ENCODE measurements at regions of chr13 and their contacts with region 1.

Region 1: DNA sequence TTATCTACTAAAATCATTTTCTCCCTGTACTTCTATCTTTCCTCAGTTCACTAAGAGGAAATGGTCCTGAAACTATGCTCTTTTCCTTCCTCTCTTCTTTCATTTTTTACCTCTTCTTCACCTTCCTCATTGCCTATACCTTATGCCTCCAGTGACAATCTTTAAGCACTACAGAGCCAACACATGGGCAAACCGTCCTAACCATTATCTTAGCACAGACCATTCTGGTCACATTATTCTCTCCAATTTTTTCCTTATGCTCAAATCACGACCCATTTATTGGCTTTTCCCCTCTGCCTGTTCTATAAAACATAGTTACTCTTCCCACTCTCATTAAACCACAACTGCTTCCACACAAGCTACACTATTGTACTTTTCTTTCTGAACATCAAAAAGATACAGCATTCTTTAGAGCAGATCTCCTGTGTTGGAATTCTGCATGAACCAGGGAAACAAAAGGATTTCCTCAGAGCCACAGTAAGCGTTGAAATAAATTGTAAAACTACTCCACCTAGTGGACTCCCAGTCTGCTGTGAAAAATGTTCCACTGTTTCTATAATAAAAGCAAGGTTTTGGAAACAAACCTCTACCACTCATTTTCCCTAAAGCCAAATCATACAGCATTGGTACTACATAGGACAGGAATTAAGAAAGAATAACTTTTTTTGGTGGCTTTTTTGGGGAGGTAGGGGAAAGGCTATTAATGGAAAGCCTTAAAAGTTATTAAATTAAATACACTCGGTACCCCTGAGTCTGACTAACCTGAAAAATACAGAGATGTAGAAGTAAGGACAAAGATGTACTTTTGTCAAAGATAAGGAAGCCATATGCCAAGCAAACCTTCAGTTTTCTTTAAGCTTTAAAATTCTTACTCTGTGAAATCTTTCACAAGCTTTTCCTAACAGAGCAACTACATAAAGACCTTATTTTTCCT is 19.5 kb downstream of the NUFIP1 start:
- DNase-seq: no peak
- ATAC-seq: no peak
- H3K4me3 ChIP-seq: no peak overlapping the region
- H3K27ac ChIP-seq: no peak overlapping the region
- H3K4me1 ChIP-seq: peaks cover 5% of the 10 kb centered on the region; the same call in 1 of the 2 replicates
- H3K27me3 ChIP-seq: no peaks in the 10 kb centered on the region
- CTCF ChIP-seq: peak; percentile 74; the same call in 1 of the 2 replicates

Region 2: DNA sequence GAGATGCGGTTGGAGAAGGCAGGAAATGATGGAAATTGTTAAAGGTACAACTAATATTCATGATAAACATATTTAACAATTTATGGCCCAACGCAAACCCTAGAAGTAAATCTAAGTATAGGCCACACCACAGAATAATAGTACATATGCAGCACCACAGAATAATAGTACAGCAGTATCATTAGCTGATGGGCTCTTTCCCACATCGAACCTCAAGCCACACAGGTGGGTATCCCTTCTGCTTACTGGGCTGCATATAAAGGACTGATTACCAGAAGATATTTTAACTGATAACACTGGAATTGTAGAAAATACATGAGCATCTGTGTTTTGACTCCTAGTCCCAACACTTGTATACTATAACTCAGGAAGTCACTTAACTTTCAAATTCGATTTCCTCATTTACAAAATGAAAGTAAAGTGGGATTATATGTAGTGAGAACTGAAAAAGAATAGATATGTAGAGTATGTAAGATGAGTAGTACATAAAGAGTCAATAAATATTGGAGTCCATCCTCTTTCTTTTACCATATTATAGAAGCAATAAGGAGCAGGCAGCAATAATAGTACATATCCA is 485.2 kb before region 1 on chr13:
- CTCF ChIA-PET with region 1: no interaction called
- POLR2A ChIA-PET with region 1: no interaction called
- in situ Hi-C with region 1: no loop called
- intact Hi-C with region 1: loop called (anchors 2 kb)
- DNase-seq: no peak
- ATAC-seq: no peak
- H3K4me3 ChIP-seq: no peak overlapping the region
- H3K27ac ChIP-seq: no peak overlapping the region
- H3K4me1 ChIP-seq: no peaks in the 10 kb centered on the region
- H3K27me3 ChIP-seq: no peaks in the 10 kb centered on the region
- CTCF ChIP-seq: no peak

Region 3: DNA sequence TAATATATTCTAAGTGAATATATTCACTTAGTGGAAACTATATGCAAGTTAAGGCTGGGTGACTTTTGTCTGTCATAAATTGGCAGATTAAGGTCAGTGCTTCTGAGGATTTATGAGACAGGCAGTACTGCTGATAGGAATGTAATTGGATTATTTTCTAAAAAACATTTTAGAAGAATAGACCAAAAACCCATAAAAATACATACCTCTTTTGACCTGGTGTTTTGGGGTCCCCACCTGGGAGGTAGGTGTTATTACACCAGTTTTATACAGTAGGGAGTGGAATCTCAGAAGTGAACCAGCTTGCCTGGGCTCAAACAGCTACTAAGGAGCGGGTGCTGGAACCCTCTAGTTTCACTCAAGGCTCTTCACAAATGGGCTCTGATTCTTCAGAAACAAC is 520.2 kb after region 1 on chr13:
- CTCF ChIA-PET with region 1: no interaction called
- POLR2A ChIA-PET with region 1: no interaction called
- in situ Hi-C with region 1: no loop called
- intact Hi-C with region 1: no loop called
- DNase-seq: no peak
- ATAC-seq: no peak
- H3K4me3 ChIP-seq: no peak overlapping the region
- H3K27ac ChIP-seq: no peak overlapping the region
- H3K4me1 ChIP-seq: no peaks in the 10 kb centered on the region
- H3K27me3 ChIP-seq: no peaks in the 10 kb centered on the region
- CTCF ChIP-seq: peak; percentile 33; the same call in 1 of the 2 replicates

Measured in Panc1 (cell line).